Body of pancreas (tissue), 4 donors: ENCODE measurements at regions of chr19 and their contacts with region 1.

Region 1: GRCh38 chr19:19997656-19998268 is 41.5 kb downstream of the ZNF682 start:
- DNase-seq: peak; percentile 57 to 79 (median 64)
- ATAC-seq: peak; percentile 56
- H3K4me3 ChIP-seq: no peak overlapping the region
- H3K27ac ChIP-seq: no peak overlapping the region
- H3K4me1 ChIP-seq: no peaks in the 10 kb centered on the region
- H3K27me3 ChIP-seq: no peaks in the 10 kb centered on the region
- CTCF ChIP-seq: peak; percentile 74 to 95 (median 89)
- POLR2A ChIP-seq: no peak

Region 2: DNA sequence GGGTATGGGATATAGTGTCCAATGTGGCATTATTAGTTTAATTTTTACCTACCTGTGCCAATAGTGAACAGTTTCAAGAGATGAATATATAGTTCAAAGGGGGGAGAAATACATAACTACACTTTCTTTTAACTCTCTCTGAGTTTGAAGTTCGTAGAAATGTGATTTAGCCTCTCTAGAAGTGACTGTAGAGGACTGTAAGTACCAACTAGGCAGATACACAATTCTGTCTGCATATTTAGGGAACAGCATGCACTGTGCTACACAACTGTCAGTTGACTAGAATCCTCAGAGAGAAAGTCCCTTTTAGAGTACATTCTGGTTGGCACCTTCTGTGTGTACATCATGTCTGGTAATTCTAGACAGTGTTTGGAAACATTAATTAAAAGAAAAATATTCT is 62.5 kb after region 1 on chr19:
- intact Hi-C with region 1: no loop called
- DNase-seq: no peak
- ATAC-seq: no peak
- H3K4me3 ChIP-seq: no peak overlapping the region
- H3K27ac ChIP-seq: no peak overlapping the region
- H3K4me1 ChIP-seq: no peaks in the 10 kb centered on the region
- H3K27me3 ChIP-seq: no peaks in the 10 kb centered on the region
- CTCF ChIP-seq: no peak
- POLR2A ChIP-seq: no peak

Region 3: GRCh38 chr19:20179946-20180345 is 182.2 kb after region 1 on chr19:
- intact Hi-C with region 1: no loop called
- DNase-seq: no peak
- ATAC-seq: no peak
- H3K4me3 ChIP-seq: no peak overlapping the region
- H3K27ac ChIP-seq: no peak overlapping the region
- H3K4me1 ChIP-seq: no peaks in the 10 kb centered on the region
- H3K27me3 ChIP-seq: no peaks in the 10 kb centered on the region
- CTCF ChIP-seq: no peak
- POLR2A ChIP-seq: no peak

Region 4: DNA sequence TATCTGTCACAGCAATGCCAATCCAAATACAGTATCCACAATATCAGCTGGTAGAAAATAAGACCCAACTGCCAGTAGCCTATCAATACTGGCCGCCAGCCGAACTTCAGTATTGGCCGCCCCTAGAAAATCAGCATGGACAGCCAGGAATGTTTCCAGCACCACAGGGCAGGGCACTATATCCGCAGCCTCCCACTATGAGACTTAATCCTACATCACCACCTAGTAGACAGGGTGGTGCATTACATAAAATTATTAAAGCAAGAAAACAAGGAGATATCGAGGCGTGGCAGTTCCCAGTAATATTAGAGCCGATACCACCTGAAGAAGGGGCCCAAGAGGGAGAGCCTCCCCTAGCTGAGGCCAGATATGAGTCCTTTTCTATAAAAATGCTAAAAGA is 280.6 kb after region 1 on chr19:
- intact Hi-C with region 1: loop called (anchors 10 kb)
- DNase-seq: peak in 3 of 4 donors; percentile 37 to 73 (median 54)
- ATAC-seq: peak; percentile 73
- H3K4me3 ChIP-seq: no peak overlapping the region
- H3K27ac ChIP-seq: peak overlapping the region in 1 of 4 donors; percentile 31
- H3K4me1 ChIP-seq: peaks cover 8% of the 10 kb centered on the region
- H3K27me3 ChIP-seq: no peaks in the 10 kb centered on the region
- CTCF ChIP-seq: peak in 5 of 7 experiments; percentile 41 to 69 (median 60)
- POLR2A ChIP-seq: no peak